Colonic mucosa (tissue), 4 donors: ENCODE measurements at regions of chr18 and their contacts with region 1.

Region 1: DNA sequence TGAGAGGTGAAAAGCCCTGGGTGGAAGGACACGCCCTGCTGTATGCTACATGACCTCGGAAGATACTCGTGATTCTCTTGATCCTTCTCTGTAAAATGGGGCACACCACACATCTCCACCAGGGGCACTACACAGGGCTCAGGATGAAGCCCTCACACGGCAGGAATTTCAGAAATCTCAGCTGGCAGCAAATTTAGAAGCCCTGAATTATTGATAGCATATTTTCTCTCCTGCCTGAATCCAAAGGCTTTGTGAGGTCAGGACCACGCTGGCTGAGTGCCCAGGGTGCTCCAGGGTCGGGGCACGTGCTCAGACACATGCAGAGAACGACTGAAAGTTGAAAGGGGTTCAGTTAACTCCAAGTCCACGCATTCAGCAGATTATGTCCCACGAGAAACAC is 42.1 kb upstream of the GALR1 start:
- DNase-seq: peak; percentile 54
- H3K4me3 ChIP-seq: no peak overlapping the region
- H3K27ac ChIP-seq: no peak overlapping the region
- H3K4me1 ChIP-seq: no peaks in the 10 kb centered on the region
- H3K27me3 ChIP-seq: no peaks in the 10 kb centered on the region
- CTCF ChIP-seq: peak; percentile 43

Region 2: GRCh38 chr18:77140439-77141109 is 67.0 kb before region 1 on chr18:
- intact Hi-C with region 1: loop called (anchors 5 kb)
- DNase-seq: no peak
- H3K4me3 ChIP-seq: no peak overlapping the region
- H3K27ac ChIP-seq: no peak overlapping the region
- H3K4me1 ChIP-seq: no peaks in the 10 kb centered on the region
- H3K27me3 ChIP-seq: no peaks in the 10 kb centered on the region
- CTCF ChIP-seq: no peak